AG04450 (cell line): ENCODE measurements at regions of chr10 and their contacts with region 1.

Region 1: DNA sequence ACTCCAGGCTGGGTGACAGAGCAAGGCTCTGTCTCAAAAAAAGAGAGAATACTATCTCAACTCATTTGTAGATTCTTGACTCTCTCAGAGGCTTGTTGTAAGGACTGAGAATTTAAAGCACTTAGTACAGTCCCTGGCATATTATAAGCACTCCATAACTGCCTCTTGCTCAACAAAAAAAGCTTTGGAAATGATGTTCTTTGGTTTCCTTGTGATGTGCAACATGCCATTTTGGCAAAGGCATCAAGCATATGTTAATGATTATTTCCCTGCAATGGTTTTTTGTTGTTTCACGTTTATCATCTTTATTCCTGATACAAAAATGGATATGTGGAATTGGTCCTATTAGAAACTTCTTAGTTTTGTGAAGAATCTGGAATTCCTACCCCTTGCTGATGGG is 15.7 kb downstream of the NOLC1 start:
- DNase-seq: no peak
- H3K4me3 ChIP-seq: no peak overlapping the region
- H3K27ac ChIP-seq: no peak overlapping the region
- H3K27me3 ChIP-seq: no peaks in the 10 kb centered on the region
- CTCF ChIP-seq: no peak

Region 2: GRCh38 chr10:102151774-102152544 is 15.9 kb before region 1 on chr10 and contains the start of gene NOLC1:
- CTCF ChIA-PET with region 1: interaction called, 59 read pairs
- POLR2A ChIA-PET with region 1: no interaction called
- DNase-seq: peak; percentile 99
- H3K4me3 ChIP-seq: peak within 1 kb of the TSS; percentile 98
- H3K27ac ChIP-seq: peak within 1 kb of the TSS; percentile 99
- H3K27me3 ChIP-seq: no peaks in the 10 kb centered on the region
- CTCF ChIP-seq: no peak
- polyA plus RNA-seq, gene NOLC1: 60.9 and 80.8 TPM in 2 replicates

Region 3: GRCh38 chr10:102352066-102352715 is 184.3 kb after region 1 on chr10:
- CTCF ChIA-PET with region 1: interaction called, 46 read pairs
- POLR2A ChIA-PET with region 1: no interaction called
- DNase-seq: peak; percentile 20
- H3K4me3 ChIP-seq: no peak overlapping the region
- H3K27ac ChIP-seq: no peak overlapping the region
- H3K27me3 ChIP-seq: no peaks in the 10 kb centered on the region
- CTCF ChIP-seq: peak; percentile 98

Region 4: GRCh38 chr10:102399217-102400089 is 231.6 kb after region 1 on chr10:
- CTCF ChIA-PET with region 1: interaction called, 31 read pairs
- POLR2A ChIA-PET with region 1: no interaction called
- DNase-seq: peak; percentile 59
- H3K4me3 ChIP-seq: peak overlapping the region; percentile 50
- H3K27ac ChIP-seq: peak overlapping the region; percentile 47
- H3K27me3 ChIP-seq: no peaks in the 10 kb centered on the region
- CTCF ChIP-seq: peak; percentile 78